Heart left ventricle (tissue), 16 donors: ENCODE measurements at regions of chr12 and their contacts with region 1.

Region 1: GRCh38 chr12:56581418-56582145 is 48.5 kb downstream of the BAZ2A start:
- DNase-seq: no peak
- ATAC-seq: no peak
- H3K4me3 ChIP-seq: no peak overlapping the region
- H3K27ac ChIP-seq: no peak overlapping the region
- H3K4me1 ChIP-seq: no peaks in the 10 kb centered on the region
- H3K27me3 ChIP-seq: no peaks in the 10 kb centered on the region
- CTCF ChIP-seq: no peak
- POLR2A ChIP-seq: no peak

Region 2: GRCh38 chr12:56537546-56537945 is 44.0 kb before region 1 on chr12:
- intact Hi-C with region 1: no loop called
- DNase-seq: no peak
- ATAC-seq: no peak
- H3K4me3 ChIP-seq: no peak overlapping the region
- H3K27ac ChIP-seq: peak overlapping the region in 1 of 12 donors; percentile 42
- H3K4me1 ChIP-seq: peaks cover 0 to 35% (median 11%) of the 10 kb centered on the region in 12 donors
- H3K27me3 ChIP-seq: no peaks in the 10 kb centered on the region
- CTCF ChIP-seq: no peak
- POLR2A ChIP-seq: no peak

Region 3: DNA sequence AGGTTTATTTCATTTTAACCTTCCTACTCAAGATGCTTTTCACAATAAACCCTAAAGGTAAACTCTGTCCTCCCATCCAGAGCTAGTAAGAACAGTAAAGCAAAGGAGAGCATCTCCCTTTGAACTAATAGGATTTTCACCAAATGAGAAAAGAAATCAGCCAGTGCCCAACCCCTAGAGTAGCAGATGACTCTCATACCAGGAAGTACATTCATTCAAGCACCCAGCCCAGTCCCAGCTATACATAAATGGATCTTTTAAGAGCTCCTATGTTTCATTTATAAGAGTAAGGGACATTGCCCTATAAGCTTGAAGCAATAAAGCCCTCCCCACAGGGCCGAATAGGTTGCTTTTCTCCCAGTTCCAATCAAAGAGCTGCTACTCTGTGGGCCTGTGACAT is 41.0 kb after region 1 on chr12:
- intact Hi-C with region 1: loop called in 1 of 10 experiments (anchors 5 kb)
- DNase-seq: no peak
- ATAC-seq: no peak
- H3K4me3 ChIP-seq: no peak overlapping the region
- H3K27ac ChIP-seq: no peak overlapping the region
- H3K4me1 ChIP-seq: peaks cover 4 to 91% (median 50%) of the 10 kb centered on the region in 12 donors
- H3K27me3 ChIP-seq: no peaks in the 10 kb centered on the region
- CTCF ChIP-seq: no peak
- POLR2A ChIP-seq: no peak

Region 4: GRCh38 chr12:56657416-56658379 is 76.1 kb after region 1 on chr12:
- intact Hi-C with region 1: no loop called
- DNase-seq: no peak
- ATAC-seq: no peak
- H3K4me3 ChIP-seq: no peak overlapping the region
- H3K27ac ChIP-seq: no peak overlapping the region
- H3K4me1 ChIP-seq: no peaks in the 10 kb centered on the region
- H3K27me3 ChIP-seq: no peaks in the 10 kb centered on the region
- CTCF ChIP-seq: no peak
- POLR2A ChIP-seq: no peak